Panc1 (cell line): ENCODE measurements at regions of chr12 and their contacts with region 1.

Region 1: GRCh38 chr12:39846971-39847650 is 227.5 kb upstream of the ABCD2 start:
- DNase-seq: no peak
- ATAC-seq: no peak
- H3K4me3 ChIP-seq: no peak overlapping the region
- H3K27ac ChIP-seq: no peak overlapping the region
- H3K4me1 ChIP-seq: no peaks in the 10 kb centered on the region
- H3K27me3 ChIP-seq: no peaks in the 10 kb centered on the region
- CTCF ChIP-seq: no peak

Region 2: GRCh38 chr12:39764944-39765560 is 82.1 kb before region 1 on chr12:
- CTCF ChIA-PET with region 1: no interaction called
- POLR2A ChIA-PET with region 1: no interaction called
- in situ Hi-C with region 1: no loop called
- intact Hi-C with region 1: no loop called
- DNase-seq: peak; percentile 12
- ATAC-seq: no peak
- H3K4me3 ChIP-seq: no peak overlapping the region
- H3K27ac ChIP-seq: no peak overlapping the region
- H3K4me1 ChIP-seq: no peaks in the 10 kb centered on the region
- H3K27me3 ChIP-seq: no peaks in the 10 kb centered on the region
- CTCF ChIP-seq: peak; percentile 72; the same call in 1 of the 2 replicates

Region 3: GRCh38 chr12:39912211-39912978 is 65.3 kb after region 1 on chr12:
- CTCF ChIA-PET with region 1: no interaction called
- POLR2A ChIA-PET with region 1: no interaction called
- in situ Hi-C with region 1: no loop called
- intact Hi-C with region 1: loop called (anchors 10 kb)
- DNase-seq: no peak
- ATAC-seq: no peak
- H3K4me3 ChIP-seq: no peak overlapping the region
- H3K27ac ChIP-seq: no peak overlapping the region
- H3K4me1 ChIP-seq: no peaks in the 10 kb centered on the region
- H3K27me3 ChIP-seq: no peaks in the 10 kb centered on the region
- CTCF ChIP-seq: no peak

Region 4: DNA sequence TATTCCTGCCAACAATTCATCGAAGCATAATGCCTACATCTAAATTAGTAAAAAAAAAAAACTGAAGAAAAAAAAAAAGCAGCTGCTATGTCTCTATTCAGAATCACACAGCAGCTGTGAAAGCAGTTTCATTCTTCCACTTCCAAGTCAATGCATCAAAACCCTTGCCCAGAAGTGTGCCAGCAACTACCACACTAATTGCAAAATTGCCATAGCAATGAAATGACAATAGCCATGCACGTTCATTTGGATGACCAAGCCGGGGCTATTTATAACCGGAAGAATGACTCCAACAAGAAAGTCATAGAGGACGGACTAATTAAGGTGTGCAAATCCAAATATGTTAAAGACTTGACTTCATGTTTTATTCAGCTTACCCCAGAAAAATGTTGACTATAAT is 216.3 kb after region 1 on chr12:
- CTCF ChIA-PET with region 1: no interaction called
- POLR2A ChIA-PET with region 1: no interaction called
- in situ Hi-C with region 1: no loop called
- intact Hi-C with region 1: no loop called
- DNase-seq: no peak
- ATAC-seq: no peak
- H3K4me3 ChIP-seq: no peak overlapping the region
- H3K27ac ChIP-seq: no peak overlapping the region
- H3K4me1 ChIP-seq: peaks cover 3% of the 10 kb centered on the region; the same call in 1 of the 2 replicates
- H3K27me3 ChIP-seq: no peaks in the 10 kb centered on the region
- CTCF ChIP-seq: no peak